Natural killer cell (primary cell): ENCODE measurements at regions of chr6 and their contacts with region 1.

Region 1: GRCh38 chr6:137866914-137867684 is at the start of gene TNFAIP3:
- DNase-seq: peak; percentile 94 to 98
- ATAC-seq: peak; percentile 76 to 93 (median 80)
- H3K4me3 ChIP-seq: peak within 1 kb of the TSS; percentile 99
- H3K4me3 Mint-ChIP-seq: peak within 1 kb of the TSS; percentile 98
- H3K27ac ChIP-seq: peak within 1 kb of the TSS; percentile 97
- H3K27ac Mint-ChIP-seq: peak within 1 kb of the TSS; percentile 96 to 98
- H3K4me1 ChIP-seq: peaks cover 41% of the 10 kb centered on the region
- H3K4me1 Mint-ChIP-seq: peaks cover 53 to 61% of the 10 kb centered on the region in 2 donors
- H3K27me3 ChIP-seq: no peaks in the 10 kb centered on the region
- H3K27me3 Mint-ChIP-seq: no peaks in the 10 kb centered on the region
- CTCF ChIP-seq: peak; percentile 78
- total RNA-seq, gene TNFAIP3: 1,163 to 1,298 (median 1,241) TPM

Region 2: GRCh38 chr6:137799950-137800568 is 67.0 kb before region 1 on chr6:
- intact Hi-C with region 1: loop called (anchors 1 kb)
- DNase-seq: peak in 1 of 2 donors; percentile 93
- ATAC-seq: peak; percentile 83 to 90 (median 89)
- H3K4me3 ChIP-seq: no peak overlapping the region
- H3K4me3 Mint-ChIP-seq: no peak overlapping the region
- H3K27ac ChIP-seq: no peak overlapping the region
- H3K27ac Mint-ChIP-seq: peak overlapping the region; percentile 65 to 67
- H3K4me1 ChIP-seq: peaks cover 20% of the 10 kb centered on the region
- H3K4me1 Mint-ChIP-seq: peaks cover 36 to 38% of the 10 kb centered on the region in 2 donors
- H3K27me3 ChIP-seq: no peaks in the 10 kb centered on the region
- H3K27me3 Mint-ChIP-seq: no peaks in the 10 kb centered on the region
- CTCF ChIP-seq: peak; percentile 76

Region 3: DNA sequence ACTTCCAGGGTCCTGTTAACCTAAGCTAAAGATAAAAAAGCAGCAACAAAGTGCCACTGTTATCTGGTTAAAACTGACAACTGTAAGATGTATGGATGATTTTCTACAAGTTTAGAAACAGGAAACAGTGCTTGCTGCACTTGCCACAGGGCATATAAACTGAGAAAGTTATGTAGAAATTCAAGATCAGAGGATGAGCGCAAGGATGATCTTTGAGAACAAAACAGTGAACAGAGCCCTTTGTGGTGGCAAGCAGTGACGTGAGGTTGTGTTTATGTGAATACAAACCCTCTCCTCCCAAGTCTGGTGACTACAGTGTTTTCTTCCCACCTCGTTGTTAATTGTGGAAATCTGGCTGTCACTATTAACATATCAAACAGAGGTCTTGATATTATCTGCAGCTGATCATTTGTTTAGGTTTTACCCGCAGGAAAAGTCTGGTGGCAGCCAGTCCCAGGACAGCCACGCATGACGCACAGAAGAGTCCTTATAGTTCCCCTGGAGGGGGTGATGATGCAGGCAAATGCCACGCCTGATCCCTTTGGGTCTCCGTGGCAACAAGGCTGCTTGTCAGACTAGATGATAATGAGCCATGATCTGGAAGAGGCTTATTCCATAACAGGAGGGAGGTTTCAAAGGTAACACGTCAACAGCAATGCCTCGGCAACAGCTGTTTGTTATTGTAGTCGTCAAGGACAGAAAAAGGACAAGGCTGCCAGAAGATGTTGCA is 43.1 kb before region 1 on chr6:
- intact Hi-C with region 1: loop called (anchors 1 kb)
- DNase-seq: peak; percentile 65 to 96
- ATAC-seq: peak; percentile 51 to 78 (median 73)
- H3K4me3 ChIP-seq: no peak overlapping the region
- H3K4me3 Mint-ChIP-seq: peak overlapping the region; percentile 29
- H3K27ac ChIP-seq: peak overlapping the region; percentile 85
- H3K27ac Mint-ChIP-seq: peak overlapping the region; percentile 92 to 99
- H3K4me1 ChIP-seq: peaks cover 52% of the 10 kb centered on the region
- H3K4me1 Mint-ChIP-seq: peaks cover 76 to 77% of the 10 kb centered on the region in 2 donors
- H3K27me3 ChIP-seq: no peaks in the 10 kb centered on the region
- H3K27me3 Mint-ChIP-seq: no peaks in the 10 kb centered on the region
- CTCF ChIP-seq: no peak

Region 4: DNA sequence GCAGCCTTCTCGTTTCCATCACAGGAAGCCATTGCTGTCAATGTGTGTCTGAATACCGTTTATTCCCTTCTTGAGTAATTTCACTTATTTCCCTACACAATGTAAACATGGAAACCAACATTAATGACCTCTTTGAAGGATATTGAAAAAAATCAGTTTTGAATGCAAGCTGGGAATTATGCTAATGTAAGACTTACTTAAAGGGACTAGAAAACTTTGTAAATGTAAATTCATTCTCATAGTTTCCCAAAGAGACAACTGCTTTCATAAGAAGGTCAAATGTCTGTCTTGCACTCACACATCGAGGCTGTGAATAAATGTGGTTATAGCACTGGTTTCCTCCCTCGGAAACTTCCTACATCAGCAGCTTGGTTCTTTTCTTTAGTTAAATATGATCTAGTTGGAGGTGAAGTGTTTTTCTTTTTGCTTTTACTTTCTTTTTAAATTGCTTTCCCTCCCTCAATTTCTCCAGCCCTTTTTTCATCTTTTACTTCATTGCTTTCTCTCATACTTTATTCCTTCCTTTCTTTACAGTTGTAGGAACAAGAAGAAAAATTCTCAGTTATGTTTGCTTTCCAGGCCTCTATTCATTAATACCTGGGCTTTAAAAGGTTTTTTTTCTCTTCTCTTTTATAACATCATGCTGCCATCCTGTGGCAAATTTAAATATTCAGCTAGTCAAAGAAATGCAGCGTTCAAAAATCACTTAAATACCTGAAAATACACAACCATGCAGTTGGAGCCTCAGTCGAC is 108.3 kb after region 1 on chr6:
- intact Hi-C with region 1: loop called (anchors 1 kb)
- DNase-seq: peak in 1 of 2 donors; percentile 82
- ATAC-seq: peak; percentile 84 to 90 (median 87)
- H3K4me3 ChIP-seq: peak overlapping the region; percentile 15
- H3K4me3 Mint-ChIP-seq: peak overlapping the region; percentile 90
- H3K27ac ChIP-seq: peak overlapping the region; percentile 93
- H3K27ac Mint-ChIP-seq: peak overlapping the region; percentile 87 to 97
- H3K4me1 ChIP-seq: peaks cover 66% of the 10 kb centered on the region
- H3K4me1 Mint-ChIP-seq: peaks cover 64 to 74% of the 10 kb centered on the region in 2 donors
- H3K27me3 ChIP-seq: no peaks in the 10 kb centered on the region
- H3K27me3 Mint-ChIP-seq: no peaks in the 10 kb centered on the region
- CTCF ChIP-seq: peak; percentile 60

Region 5: GRCh38 chr6:138109042-138109997 is 242.2 kb after region 1 on chr6:
- intact Hi-C with region 1: loop called (anchors 5 kb)
- DNase-seq: peak; percentile 69 to 90
- ATAC-seq: peak; percentile 73 to 83 (median 74)
- H3K4me3 ChIP-seq: no peak overlapping the region
- H3K4me3 Mint-ChIP-seq: peak overlapping the region; percentile 38
- H3K27ac ChIP-seq: no peak overlapping the region
- H3K27ac Mint-ChIP-seq: no peak overlapping the region
- H3K4me1 ChIP-seq: peaks cover 13% of the 10 kb centered on the region
- H3K4me1 Mint-ChIP-seq: peaks cover 8 to 23% of the 10 kb centered on the region in 2 donors
- H3K27me3 ChIP-seq: peaks cover 34% of the 10 kb centered on the region
- H3K27me3 Mint-ChIP-seq: peaks cover 44% of the 10 kb centered on the region in 2 donors
- CTCF ChIP-seq: peak; percentile 93